Naive thymus-derived CD4-positive, alpha-beta T cell (primary cell): ENCODE measurements at regions of chr10 and their contacts with region 1.

Region 1: DNA sequence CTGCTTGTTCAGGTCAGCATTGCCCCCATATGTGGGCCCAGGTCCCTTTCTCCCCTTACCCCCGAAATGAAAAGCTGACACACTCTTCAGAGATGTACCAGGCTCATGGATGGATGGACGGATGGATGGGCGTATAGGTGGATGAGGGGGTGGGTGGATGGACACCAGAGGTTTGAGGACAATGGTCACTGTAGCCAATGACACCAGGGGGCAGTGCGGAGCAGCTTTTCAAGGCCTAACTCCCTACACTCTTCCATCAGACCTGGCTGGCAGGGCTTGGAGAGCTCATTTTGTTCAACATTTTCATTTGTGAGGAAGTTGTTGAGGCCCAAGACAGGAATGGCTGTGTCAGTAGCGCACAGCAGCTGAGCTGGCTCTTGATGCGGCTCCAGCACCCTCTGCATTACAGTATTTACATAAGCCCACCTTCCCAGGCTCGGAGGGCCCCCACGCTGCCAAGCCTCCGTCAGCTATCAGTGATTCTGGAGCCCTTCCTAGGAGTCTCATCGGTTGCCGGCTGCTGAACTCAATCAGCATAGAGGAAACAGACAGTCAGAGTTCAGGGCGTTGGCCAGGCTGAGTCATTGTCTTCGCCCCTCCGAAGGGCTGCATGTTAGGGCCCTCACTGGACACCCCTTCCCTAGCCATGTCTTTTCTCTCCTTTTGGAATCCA is 11.6 kb upstream of the FFAR4 start:
- DNase-seq: peak in 4 of 9 donors; percentile 12 to 37 (median 22)
- ATAC-seq: peak; percentile 83
- H3K4me3 ChIP-seq: no peak overlapping the region
- H3K4me3 Mint-ChIP-seq: no peak overlapping the region
- H3K27ac ChIP-seq: no peak overlapping the region
- H3K27ac Mint-ChIP-seq: no peak overlapping the region
- H3K4me1 ChIP-seq: no peaks in the 10 kb centered on the region
- H3K4me1 Mint-ChIP-seq: peaks cover 0 to 5% (median 0%) of the 10 kb centered on the region in 7 donors
- H3K27me3 ChIP-seq: no peaks in the 10 kb centered on the region
- H3K27me3 Mint-ChIP-seq: peaks cover 0 to 18% (median 10%) of the 10 kb centered on the region in 5 donors

Region 2: GRCh38 chr10:93288654-93289634 is 266.0 kb before region 1 on chr10:
- CTCF ChIA-PET with region 1: no interaction called
- POLR2A ChIA-PET with region 1: no interaction called
- intact Hi-C with region 1: no loop called
- DNase-seq: peak in 8 of 9 donors; percentile 11 to 57 (median 40)
- ATAC-seq: peak; percentile 65
- H3K4me3 ChIP-seq: no peak overlapping the region
- H3K4me3 Mint-ChIP-seq: no peak overlapping the region
- H3K27ac ChIP-seq: no peak overlapping the region
- H3K27ac Mint-ChIP-seq: peak overlapping the region in 1 of 9 donors; percentile 12
- H3K4me1 ChIP-seq: no peaks in the 10 kb centered on the region
- H3K4me1 Mint-ChIP-seq: peaks cover 0 to 2% (median 0%) of the 10 kb centered on the region in 7 donors
- H3K27me3 ChIP-seq: no peaks in the 10 kb centered on the region
- H3K27me3 Mint-ChIP-seq: peaks cover 0 to 6% (median 3%) of the 10 kb centered on the region in 5 donors

Region 3: DNA sequence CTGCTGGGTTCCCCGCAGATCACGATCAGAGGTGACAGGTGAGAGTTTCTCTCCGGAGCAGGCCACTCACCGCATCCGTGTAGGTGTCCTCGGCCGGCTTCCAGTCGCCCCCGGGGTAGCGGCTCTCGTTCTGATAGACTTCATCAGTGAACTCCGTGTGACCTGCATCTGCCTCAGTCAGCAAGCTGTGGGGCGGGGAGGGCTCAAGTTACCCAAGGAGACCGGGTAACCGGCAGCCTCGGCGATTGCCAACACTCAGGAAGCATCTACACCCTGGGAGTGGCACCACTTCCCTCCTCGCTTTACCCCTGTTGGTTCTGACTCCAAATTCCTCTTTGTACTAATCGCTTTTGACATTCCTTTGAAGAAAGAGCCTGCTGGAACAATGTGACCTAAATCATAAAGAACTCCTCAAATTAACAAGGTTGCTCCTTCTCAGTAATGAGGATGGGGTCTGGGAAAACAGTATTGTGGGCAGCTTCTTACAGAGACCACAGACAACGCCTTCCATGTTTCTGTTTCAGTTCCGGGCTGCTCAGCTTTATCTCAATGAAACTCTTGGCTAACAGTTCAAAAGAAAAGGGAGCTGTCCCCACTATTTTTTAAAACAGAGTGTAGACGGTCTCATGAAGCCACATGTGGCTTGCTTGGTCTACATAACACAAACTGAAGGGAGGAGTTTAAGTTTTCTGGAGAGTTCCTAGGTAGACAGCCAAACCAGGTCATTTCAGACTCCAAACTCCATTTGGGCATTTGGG is 190.8 kb before region 1 on chr10:
- CTCF ChIA-PET with region 1: no interaction called
- POLR2A ChIA-PET with region 1: no interaction called
- intact Hi-C with region 1: no loop called
- DNase-seq: peak in 1 of 9 donors; percentile 14
- ATAC-seq: peak; percentile 81
- H3K4me3 ChIP-seq: no peak overlapping the region
- H3K4me3 Mint-ChIP-seq: no peak overlapping the region
- H3K27ac ChIP-seq: no peak overlapping the region
- H3K27ac Mint-ChIP-seq: no peak overlapping the region
- H3K4me1 ChIP-seq: no peaks in the 10 kb centered on the region
- H3K4me1 Mint-ChIP-seq: peaks cover 0 to 8% (median 5%) of the 10 kb centered on the region in 7 donors
- H3K27me3 ChIP-seq: no peaks in the 10 kb centered on the region
- H3K27me3 Mint-ChIP-seq: peaks cover 0 to 5% (median 0%) of the 10 kb centered on the region in 5 donors

Region 4: DNA sequence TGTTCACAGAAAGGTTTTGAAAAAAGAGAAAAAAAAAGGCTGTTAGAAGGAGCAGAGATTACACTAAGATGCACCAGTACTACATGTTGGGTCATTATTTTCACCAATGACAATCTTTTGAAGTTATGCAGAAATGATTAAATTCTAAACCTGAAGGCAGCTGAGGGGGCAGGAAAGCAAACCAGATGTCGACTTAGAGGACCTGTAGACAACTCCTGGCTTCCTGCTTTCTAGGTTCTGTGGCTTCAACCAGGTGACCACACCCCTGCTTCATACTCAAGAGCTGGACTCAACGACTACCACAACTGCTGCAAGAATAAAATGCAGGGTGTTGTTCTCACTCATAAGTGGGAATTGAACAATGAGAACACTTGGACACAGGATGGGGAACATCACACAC is 102.8 kb before region 1 on chr10:
- CTCF ChIA-PET with region 1: no interaction called
- POLR2A ChIA-PET with region 1: no interaction called
- intact Hi-C with region 1: no loop called
- DNase-seq: no peak
- ATAC-seq: no peak
- H3K4me3 ChIP-seq: no peak overlapping the region
- H3K4me3 Mint-ChIP-seq: peak overlapping the region in 1 of 10 donors; percentile 35
- H3K27ac ChIP-seq: no peak overlapping the region
- H3K27ac Mint-ChIP-seq: peak overlapping the region in 2 of 9 donors; percentile 43 to 53
- H3K4me1 ChIP-seq: no peaks in the 10 kb centered on the region
- H3K4me1 Mint-ChIP-seq: peaks cover 0 to 15% (median 11%) of the 10 kb centered on the region in 7 donors
- H3K27me3 ChIP-seq: no peaks in the 10 kb centered on the region
- H3K27me3 Mint-ChIP-seq: no peaks in the 10 kb centered on the region

Region 5: DNA sequence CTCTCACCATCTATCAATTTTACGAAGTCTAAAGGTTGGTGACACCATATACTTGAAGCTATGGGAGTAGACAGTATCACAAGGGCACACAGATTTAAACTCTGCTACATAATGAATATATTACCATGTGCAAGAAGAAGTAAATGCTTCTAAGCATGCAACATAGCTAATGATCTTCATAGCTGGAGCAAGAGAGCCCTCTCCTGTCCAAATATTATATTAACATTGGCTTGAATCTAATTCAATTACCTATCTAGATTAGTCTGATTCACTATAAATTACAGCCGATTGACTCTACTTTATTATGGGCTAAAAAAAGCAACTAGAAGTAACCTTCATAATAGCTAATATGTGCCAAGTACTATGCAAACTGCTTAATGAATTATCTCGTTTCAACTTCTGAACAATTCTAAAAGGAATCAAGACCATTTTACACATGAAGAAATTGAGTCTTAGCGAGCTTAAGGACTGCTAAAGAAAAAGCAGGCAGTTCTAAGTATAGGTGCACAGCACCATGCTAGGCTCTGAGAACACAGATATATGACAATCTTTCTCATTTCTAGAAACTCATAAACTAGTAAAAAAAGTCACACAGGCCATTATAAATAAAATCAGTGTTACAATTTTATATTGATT is 125.6 kb after region 1 on chr10:
- CTCF ChIA-PET with region 1: interaction called, 4 read pairs
- POLR2A ChIA-PET with region 1: no interaction called
- intact Hi-C with region 1: loop called (anchors 1 kb)
- DNase-seq: peak in 1 of 9 donors; percentile 6
- ATAC-seq: peak; percentile 49
- H3K4me3 ChIP-seq: no peak overlapping the region
- H3K4me3 Mint-ChIP-seq: no peak overlapping the region
- H3K27ac ChIP-seq: no peak overlapping the region
- H3K27ac Mint-ChIP-seq: no peak overlapping the region
- H3K4me1 ChIP-seq: no peaks in the 10 kb centered on the region
- H3K4me1 Mint-ChIP-seq: peaks cover 0 to 2% (median 0%) of the 10 kb centered on the region in 7 donors
- H3K27me3 ChIP-seq: no peaks in the 10 kb centered on the region
- H3K27me3 Mint-ChIP-seq: no peaks in the 10 kb centered on the region

Region 6: GRCh38 chr10:93816123-93816747 is 261.3 kb after region 1 on chr10:
- CTCF ChIA-PET with region 1: no interaction called
- POLR2A ChIA-PET with region 1: no interaction called
- intact Hi-C with region 1: loop called in 1 of 2 experiments (anchors 2 kb)
- DNase-seq: peak in 6 of 9 donors; percentile 2 to 22 (median 8)
- ATAC-seq: peak; percentile 57
- H3K4me3 ChIP-seq: no peak overlapping the region
- H3K4me3 Mint-ChIP-seq: no peak overlapping the region
- H3K27ac ChIP-seq: no peak overlapping the region
- H3K27ac Mint-ChIP-seq: no peak overlapping the region
- H3K4me1 ChIP-seq: no peaks in the 10 kb centered on the region
- H3K4me1 Mint-ChIP-seq: peaks cover 0 to 13% (median 8%) of the 10 kb centered on the region in 7 donors
- H3K27me3 ChIP-seq: peaks cover 0 to 4% of the 10 kb centered on the region in 2 donors
- H3K27me3 Mint-ChIP-seq: peaks cover 35 to 50% (median 45%) of the 10 kb centered on the region in 5 donors

Region 7: DNA sequence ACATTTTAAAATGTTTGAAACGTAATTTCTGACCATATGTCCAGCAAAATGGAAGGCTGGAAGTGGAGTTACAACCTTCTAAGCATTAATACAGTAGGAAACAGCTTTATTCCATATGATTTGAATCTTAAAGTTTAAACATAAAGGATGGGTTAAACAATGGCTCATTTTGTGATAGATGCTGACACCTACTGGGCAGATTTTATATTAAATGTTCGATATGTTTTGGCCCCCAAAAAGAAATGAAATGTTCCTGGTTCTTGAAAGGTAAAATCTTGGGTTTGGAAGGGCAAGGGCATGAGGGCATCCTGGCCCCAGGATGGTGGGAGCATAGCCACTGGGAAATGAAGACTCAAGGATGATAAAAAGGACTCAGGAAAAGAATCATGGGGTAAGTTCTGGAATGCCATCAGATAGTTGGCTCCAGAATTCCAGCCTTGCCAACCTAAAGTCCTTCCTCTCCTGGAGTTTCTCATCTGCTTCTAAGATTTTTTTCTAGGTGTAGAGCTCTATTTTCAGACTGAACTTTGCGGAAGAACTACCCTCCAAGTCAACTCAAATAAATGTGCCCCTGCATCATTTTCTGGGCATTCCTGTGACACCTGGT is 304.3 kb after region 1 on chr10:
- CTCF ChIA-PET with region 1: no interaction called
- POLR2A ChIA-PET with region 1: no interaction called
- intact Hi-C with region 1: loop called in 1 of 2 experiments (anchors 1 kb)
- DNase-seq: peak in 1 of 9 donors; percentile 7
- ATAC-seq: no peak
- H3K4me3 ChIP-seq: no peak overlapping the region
- H3K4me3 Mint-ChIP-seq: no peak overlapping the region
- H3K27ac ChIP-seq: no peak overlapping the region
- H3K27ac Mint-ChIP-seq: no peak overlapping the region
- H3K4me1 ChIP-seq: no peaks in the 10 kb centered on the region
- H3K4me1 Mint-ChIP-seq: no peaks in the 10 kb centered on the region
- H3K27me3 ChIP-seq: no peaks in the 10 kb centered on the region
- H3K27me3 Mint-ChIP-seq: peaks cover 0 to 13% (median 6%) of the 10 kb centered on the region in 5 donors